ENCODE measurements at regions of chr7 and their contacts with region 1.

Region 1: DNA sequence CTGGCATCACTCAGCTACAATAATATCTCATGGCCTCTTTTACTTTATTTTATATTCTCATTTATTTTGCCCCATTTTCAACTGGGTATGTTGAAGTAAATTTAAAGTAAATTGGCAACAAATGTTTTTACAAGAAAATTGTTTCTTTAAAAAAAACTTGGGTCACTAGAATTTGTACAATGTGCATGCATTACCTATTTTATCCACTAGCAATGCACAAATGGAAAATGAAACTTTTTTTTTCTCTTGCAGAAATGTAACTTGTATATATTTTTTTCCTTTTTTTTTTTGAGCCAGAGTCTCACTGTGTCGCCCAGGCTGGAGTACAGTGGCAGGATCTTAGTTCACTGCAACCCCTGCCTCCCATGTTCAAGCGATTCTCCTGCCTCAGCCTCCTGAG is 10.3 kb upstream of the H2AZ2 start:
- DNase-seq: no peak
- ATAC-seq: no peak
- H3K4me3 ChIP-seq: no peak overlapping the region
- H3K4me3 Mint-ChIP-seq: no peak overlapping the region
- H3K27ac ChIP-seq: no peak overlapping the region
- H3K27ac Mint-ChIP-seq: no peak overlapping the region
- H3K4me1 ChIP-seq: peaks cover 7% of the 10 kb centered on the region
- H3K4me1 Mint-ChIP-seq: peaks cover 0 to 5% of the 10 kb centered on the region in 2 donors
- H3K27me3 ChIP-seq: no peaks in the 10 kb centered on the region
- H3K27me3 Mint-ChIP-seq: peaks cover 2 to 7% of the 10 kb centered on the region in 2 donors
- CTCF ChIP-seq: no peak

Region 2: DNA sequence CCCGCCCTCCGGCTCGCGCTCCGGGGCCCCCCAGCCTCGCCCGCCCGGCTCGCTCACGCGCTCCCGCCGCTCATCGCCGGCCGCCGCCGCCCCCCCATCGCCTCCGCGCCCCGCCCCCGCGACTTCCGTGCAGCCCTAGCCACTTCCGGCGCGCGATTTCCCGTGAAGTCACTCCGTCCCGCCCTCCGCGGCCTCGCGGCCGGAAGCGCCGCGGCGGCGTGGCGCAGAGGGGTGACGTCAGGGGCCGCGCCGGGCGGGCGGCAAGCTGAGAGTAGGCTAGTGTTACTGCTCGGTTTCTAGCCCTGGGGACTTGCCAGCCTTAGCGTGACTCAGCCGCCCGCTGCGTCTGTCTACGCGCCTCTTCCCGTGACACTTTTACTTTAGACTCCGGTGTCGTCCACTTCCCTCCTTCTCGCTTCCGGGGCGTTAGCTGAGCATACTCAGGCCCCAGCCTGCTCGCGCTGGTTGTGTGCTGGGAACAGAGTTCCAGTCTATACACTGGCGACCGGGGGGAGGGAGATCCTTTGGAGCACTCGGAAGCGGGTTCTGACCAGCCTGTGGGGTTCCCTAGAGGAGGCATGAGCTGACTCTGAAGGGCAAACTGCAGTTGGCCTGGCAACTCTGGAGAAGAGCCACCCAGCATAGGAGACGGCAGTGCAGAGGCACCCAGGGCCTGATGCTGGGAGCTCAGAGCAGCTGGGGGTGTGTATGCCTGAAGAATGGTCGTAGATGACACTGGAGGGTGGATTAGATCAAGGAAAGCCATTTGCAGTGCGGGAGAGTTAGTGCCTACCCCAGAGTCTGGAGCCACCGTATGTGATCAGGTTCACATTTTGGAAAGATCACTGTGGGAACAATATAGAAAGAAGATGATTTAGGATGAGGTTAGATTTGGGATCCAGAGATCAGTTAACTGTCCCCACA is 27.5 kb after region 1 on chr7 and contains the start of gene PURB:
- intact Hi-C with region 1: no loop called
- DNase-seq: peak; percentile 98 to 99
- ATAC-seq: peak; percentile 83 to 94 (median 86)
- H3K4me3 ChIP-seq: peak within 1 kb of the TSS; percentile 75
- H3K4me3 Mint-ChIP-seq: peak within 1 kb of the TSS; percentile 99
- H3K27ac ChIP-seq: peak within 1 kb of the TSS; percentile 97
- H3K27ac Mint-ChIP-seq: peak within 1 kb of the TSS; percentile 100
- H3K4me1 ChIP-seq: peaks cover 35% of the 10 kb centered on the region
- H3K4me1 Mint-ChIP-seq: peaks cover 34 to 45% of the 10 kb centered on the region in 2 donors
- H3K27me3 ChIP-seq: no peaks in the 10 kb centered on the region
- H3K27me3 Mint-ChIP-seq: no peaks in the 10 kb centered on the region
- CTCF ChIP-seq: no peak
- total RNA-seq, gene PURB: 28.5 to 36.0 (median 33.7) TPM

Region 3: GRCh38 chr7:44921607-44922359 is 63.6 kb after region 1 on chr7:
- intact Hi-C with region 1: loop called (anchors 1 kb)
- DNase-seq: peak; percentile 94
- ATAC-seq: peak; percentile 94 to 99 (median 99)
- H3K4me3 ChIP-seq: no peak overlapping the region
- H3K4me3 Mint-ChIP-seq: no peak overlapping the region
- H3K27ac ChIP-seq: no peak overlapping the region
- H3K27ac Mint-ChIP-seq: peak overlapping the region in 1 of 2 donors; percentile 74
- H3K4me1 ChIP-seq: peaks cover 5% of the 10 kb centered on the region
- H3K4me1 Mint-ChIP-seq: peaks cover 0 to 4% of the 10 kb centered on the region in 2 donors
- H3K27me3 ChIP-seq: no peaks in the 10 kb centered on the region
- H3K27me3 Mint-ChIP-seq: peaks cover 0 to 7% of the 10 kb centered on the region in 2 donors
- CTCF ChIP-seq: peak; percentile 87